Mammary epithelial cell (primary cell): ENCODE measurements at regions of chr2 and their contacts with region 1.

Region 1: GRCh38 chr2:233012301-233012971 is 620 bp downstream of the NGEF start:
- DNase-seq: no peak
- H3K4me3 ChIP-seq: no peak overlapping the region
- H3K27ac ChIP-seq: no peak overlapping the region
- H3K4me1 ChIP-seq: no peaks in the 10 kb centered on the region
- H3K27me3 ChIP-seq: no peaks in the 10 kb centered on the region
- CTCF ChIP-seq: no peak

Region 2: GRCh38 chr2:233100192-233100998 is 88.0 kb after region 1 on chr2:
- CTCF ChIA-PET with region 1: no interaction called
- dilution Hi-C with region 1: loop called (anchors 5 kb)
- in situ Hi-C with region 1: no loop called
- intact Hi-C with region 1: no loop called
- DNase-seq: no peak
- H3K4me3 ChIP-seq: no peak overlapping the region
- H3K27ac ChIP-seq: no peak overlapping the region
- H3K4me1 ChIP-seq: no peaks in the 10 kb centered on the region
- H3K27me3 ChIP-seq: no peaks in the 10 kb centered on the region
- CTCF ChIP-seq: no peak